CD8-positive, alpha-beta T cell (primary cell): ENCODE measurements at regions of chr22 and their contacts with region 1.

Region 1: DNA sequence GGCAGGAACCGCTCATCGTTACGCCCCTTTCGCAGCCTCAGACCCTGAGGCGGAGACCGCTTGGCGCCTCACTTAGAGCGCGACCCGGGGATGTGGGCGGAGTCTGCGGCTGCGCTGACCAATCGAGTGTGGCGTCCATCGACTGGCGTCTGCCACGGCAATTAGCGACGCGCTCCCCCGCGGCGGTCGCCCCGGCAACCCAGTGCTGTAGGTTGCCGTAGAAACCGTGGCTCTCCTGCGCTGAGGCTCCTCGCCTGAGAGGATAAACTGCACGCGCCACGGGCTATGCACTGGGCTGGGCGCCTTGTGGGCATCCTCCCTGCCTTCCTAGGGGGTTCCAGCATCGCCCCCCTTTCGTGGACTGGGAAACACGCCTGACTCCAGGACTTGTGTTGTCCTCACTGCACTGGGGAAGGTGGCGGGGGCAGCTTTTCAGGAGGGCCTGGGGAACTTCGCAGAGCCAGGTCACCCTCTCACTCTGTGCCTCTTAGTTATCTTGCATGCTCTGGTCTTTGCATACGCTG is 701 bp upstream of the P2RX6 start:
- DNase-seq: peak; percentile 65 to 95 (median 84)
- ATAC-seq: peak; percentile 90
- H3K4me3 ChIP-seq: peak overlapping the region; percentile 46 to 70
- H3K4me3 Mint-ChIP-seq: peak overlapping the region; percentile 84
- H3K27ac ChIP-seq: peak overlapping the region; percentile 66 to 78
- H3K27ac Mint-ChIP-seq: peak overlapping the region; percentile 88
- H3K4me1 ChIP-seq: peaks cover 23% of the 10 kb centered on the region
- H3K4me1 Mint-ChIP-seq: peaks cover 27% of the 10 kb centered on the region
- H3K27me3 ChIP-seq: no peaks in the 10 kb centered on the region
- H3K27me3 Mint-ChIP-seq: no peaks in the 10 kb centered on the region
- CTCF ChIP-seq: no peak

Region 2: DNA sequence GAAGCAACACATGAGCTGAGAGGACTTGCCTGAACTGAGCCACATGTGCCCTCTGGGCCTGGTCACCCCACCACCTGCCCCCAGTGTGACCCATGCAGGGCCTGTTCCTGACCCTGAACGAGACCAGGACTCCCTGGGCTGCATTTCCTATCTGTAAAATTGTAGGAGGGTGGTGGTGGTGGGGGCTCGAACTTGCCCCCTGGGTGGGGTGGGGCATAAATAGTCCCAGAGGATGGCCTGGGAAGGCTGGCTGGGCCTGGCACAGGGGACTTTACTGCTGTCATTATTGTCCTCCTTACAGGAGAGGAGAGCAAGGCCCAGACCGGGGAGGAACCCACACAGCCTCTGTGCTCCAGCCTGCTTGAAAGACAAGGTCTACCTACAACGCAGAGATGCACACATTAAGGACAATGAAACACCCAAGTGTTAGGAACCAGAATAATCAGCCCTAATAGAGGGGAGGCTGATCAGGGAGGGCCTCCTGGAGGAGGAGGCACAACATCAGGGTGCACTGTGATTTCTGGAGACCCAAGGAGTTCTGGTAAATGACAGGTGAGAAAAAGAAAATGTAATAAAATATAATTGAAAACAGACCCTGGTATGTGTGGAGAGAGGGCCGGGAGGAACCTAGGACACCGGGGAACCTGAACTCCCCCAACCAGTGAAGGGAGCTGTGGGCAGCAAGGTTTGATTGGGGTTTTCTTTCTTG is 50.0 kb before region 1 on chr22:
- CTCF ChIA-PET with region 1: interaction called, 4 read pairs
- POLR2A ChIA-PET with region 1: no interaction called
- intact Hi-C with region 1: loop called in 1 of 2 experiments (anchors 5 kb)
- DNase-seq: no peak
- ATAC-seq: no peak
- H3K4me3 ChIP-seq: peak overlapping the region; percentile 7 to 35
- H3K4me3 Mint-ChIP-seq: peak overlapping the region; percentile 77
- H3K27ac ChIP-seq: no peak overlapping the region
- H3K27ac Mint-ChIP-seq: no peak overlapping the region
- H3K4me1 ChIP-seq: peaks cover 9% of the 10 kb centered on the region
- H3K4me1 Mint-ChIP-seq: peaks cover 8% of the 10 kb centered on the region
- H3K27me3 ChIP-seq: peaks cover 0 to 15% of the 10 kb centered on the region in 2 experiments
- H3K27me3 Mint-ChIP-seq: peaks cover 17% of the 10 kb centered on the region
- CTCF ChIP-seq: no peak

Region 3: GRCh38 chr22:20981787-20982562 is 32.3 kb before region 1 on chr22 and contains the start of gene LZTR1:
- CTCF ChIA-PET with region 1: no interaction called
- POLR2A ChIA-PET with region 1: no interaction called
- intact Hi-C with region 1: loop called in 1 of 2 experiments (anchors 1 kb)
- DNase-seq: peak; percentile 33 to 86 (median 66)
- ATAC-seq: peak; percentile 64
- H3K4me3 ChIP-seq: peak within 1 kb of the TSS; percentile 58 to 74
- H3K4me3 Mint-ChIP-seq: peak within 1 kb of the TSS; percentile 93
- H3K27ac ChIP-seq: peak within 1 kb of the TSS; percentile 66 to 78
- H3K27ac Mint-ChIP-seq: peak within 1 kb of the TSS; percentile 92
- H3K4me1 ChIP-seq: peaks cover 31% of the 10 kb centered on the region
- H3K4me1 Mint-ChIP-seq: peaks cover 43% of the 10 kb centered on the region
- H3K27me3 ChIP-seq: no peaks in the 10 kb centered on the region
- H3K27me3 Mint-ChIP-seq: no peaks in the 10 kb centered on the region
- CTCF ChIP-seq: no peak
- total RNA-seq, gene LZTR1: 42.8 to 44.8 TPM

Region 4: GRCh38 chr22:21026783-21027611 is 12.7 kb after region 1 on chr22:
- CTCF ChIA-PET with region 1: no interaction called
- POLR2A ChIA-PET with region 1: no interaction called
- intact Hi-C with region 1: no loop called
- DNase-seq: no peak
- ATAC-seq: no peak
- H3K4me3 ChIP-seq: no peak overlapping the region
- H3K4me3 Mint-ChIP-seq: no peak overlapping the region
- H3K27ac ChIP-seq: no peak overlapping the region
- H3K27ac Mint-ChIP-seq: no peak overlapping the region
- H3K4me1 ChIP-seq: peaks cover 21% of the 10 kb centered on the region
- H3K4me1 Mint-ChIP-seq: peaks cover 17% of the 10 kb centered on the region
- H3K27me3 ChIP-seq: peaks cover 0 to 3% of the 10 kb centered on the region in 2 experiments
- H3K27me3 Mint-ChIP-seq: peaks cover 13% of the 10 kb centered on the region
- CTCF ChIP-seq: no peak

Region 5: DNA sequence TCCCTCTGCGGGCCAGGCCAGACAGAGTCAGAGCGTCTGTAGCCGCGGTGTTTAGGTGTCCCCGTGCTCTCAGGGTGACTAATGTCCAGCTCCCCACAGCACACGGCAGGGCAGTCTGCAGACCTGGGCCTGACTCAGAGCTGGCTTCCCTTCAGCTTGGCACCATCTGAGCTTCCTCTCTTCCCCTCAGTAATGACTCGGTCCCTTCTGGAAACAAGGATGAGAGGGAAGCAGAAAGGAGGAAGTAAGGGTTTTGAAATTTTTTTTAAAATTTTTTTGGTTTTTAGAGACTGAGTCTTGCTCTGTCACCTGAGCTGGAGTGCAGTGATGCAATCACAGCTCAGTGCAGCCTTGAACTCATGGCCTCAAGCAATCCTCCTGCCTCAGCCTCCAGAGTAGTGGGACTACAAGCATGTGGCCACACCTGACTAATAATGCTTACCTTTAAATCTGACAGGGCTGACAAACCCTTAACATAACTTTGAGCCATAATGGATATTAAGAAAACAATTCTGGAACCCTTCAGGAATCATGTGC is 60.0 kb after region 1 on chr22:
- CTCF ChIA-PET with region 1: no interaction called
- POLR2A ChIA-PET with region 1: no interaction called
- intact Hi-C with region 1: no loop called
- DNase-seq: no peak
- ATAC-seq: no peak
- H3K4me3 ChIP-seq: no peak overlapping the region
- H3K4me3 Mint-ChIP-seq: no peak overlapping the region
- H3K27ac ChIP-seq: no peak overlapping the region
- H3K27ac Mint-ChIP-seq: no peak overlapping the region
- H3K4me1 ChIP-seq: no peaks in the 10 kb centered on the region
- H3K4me1 Mint-ChIP-seq: no peaks in the 10 kb centered on the region
- H3K27me3 ChIP-seq: no peaks in the 10 kb centered on the region
- H3K27me3 Mint-ChIP-seq: peaks cover 2% of the 10 kb centered on the region
- CTCF ChIP-seq: no peak